Lower leg skin (tissue), 4 donors: ENCODE measurements at regions of chr14 and their contacts with region 1.

Region 1: DNA sequence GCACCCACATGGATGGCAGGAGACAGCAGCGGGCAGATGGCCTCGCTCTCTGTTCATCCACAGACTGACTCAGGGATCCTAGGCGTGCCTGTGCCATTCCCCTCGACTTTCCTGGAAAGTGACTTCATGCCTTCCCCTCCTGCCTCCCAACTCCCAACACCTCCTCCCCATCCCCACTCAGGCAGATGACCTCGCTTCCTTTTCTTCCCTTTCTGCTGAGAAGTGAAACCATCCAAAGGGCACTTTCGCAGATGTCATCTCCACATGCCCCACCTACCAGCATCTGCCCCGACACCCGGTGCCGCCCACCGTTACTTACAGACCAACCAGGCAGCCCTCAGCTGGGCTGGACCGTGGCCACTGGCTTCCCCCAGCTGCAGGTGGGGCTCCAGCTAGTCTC is 29.6 kb downstream of the BEGAIN start:
- DNase-seq: no peak
- H3K4me3 ChIP-seq: no peak overlapping the region
- CTCF ChIP-seq: no peak
- POLR2A ChIP-seq: no peak

Region 2: DNA sequence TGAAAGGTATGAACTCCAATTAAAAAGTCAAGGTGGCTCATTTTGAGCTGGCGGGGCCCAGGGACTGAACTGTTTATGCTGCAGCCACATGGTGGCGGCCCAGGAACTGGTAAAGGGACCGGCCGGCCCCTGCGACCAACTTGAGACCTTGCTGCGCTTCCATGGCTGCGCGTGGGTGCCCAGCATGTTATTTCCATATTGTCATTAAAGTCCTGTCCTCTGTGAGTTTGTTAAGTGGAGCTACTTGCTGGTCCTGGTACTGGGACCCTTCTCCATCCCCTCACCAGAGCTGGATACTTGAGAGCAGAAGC is 32.8 kb before region 1 on chr14:
- intact Hi-C with region 1: loop called (anchors 1 kb)
- DNase-seq: peak; percentile 12 to 80
- H3K4me3 ChIP-seq: no peak overlapping the region
- CTCF ChIP-seq: no peak
- POLR2A ChIP-seq: no peak